ENCODE measurements at regions of chr20 and their contacts with region 1.

Region 1: GRCh38 chr20:41889126-41889870 is 271.1 kb upstream of the CHD6 start:
- DNase-seq: peak; percentile 50
- H3K4me3 Mint-ChIP-seq: no peak overlapping the region
- H3K27ac Mint-ChIP-seq: no peak overlapping the region
- H3K4me1 Mint-ChIP-seq: peaks cover 20% of the 10 kb centered on the region
- H3K27me3 Mint-ChIP-seq: no peaks in the 10 kb centered on the region
- CTCF ChIP-seq: peak; percentile 13

Region 2: DNA sequence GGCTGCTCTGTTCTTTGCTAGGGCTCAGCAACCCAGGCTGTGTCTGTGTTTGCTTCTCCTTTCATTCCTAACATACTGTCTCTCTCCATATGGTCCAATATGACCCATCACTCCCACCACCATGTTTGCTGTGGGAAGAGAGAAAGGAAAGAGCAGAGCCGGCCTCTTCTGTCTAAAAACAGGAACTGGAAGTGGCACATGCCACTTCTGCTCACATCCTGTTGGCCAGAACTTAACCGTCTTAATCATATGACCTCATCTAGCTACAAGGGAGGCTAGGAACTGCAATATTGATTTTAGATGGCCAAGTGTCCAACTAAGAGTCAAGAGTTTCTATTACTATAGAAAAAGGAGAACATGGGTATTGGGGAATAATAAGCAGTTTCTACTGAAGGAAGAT is 58.6 kb before region 1 on chr20:
- CTCF ChIA-PET with region 1: no interaction called
- intact Hi-C with region 1: no loop called
- DNase-seq: no peak
- H3K4me3 Mint-ChIP-seq: no peak overlapping the region
- H3K27ac Mint-ChIP-seq: no peak overlapping the region
- H3K4me1 Mint-ChIP-seq: no peaks in the 10 kb centered on the region
- H3K27me3 Mint-ChIP-seq: peaks cover 16% of the 10 kb centered on the region
- CTCF ChIP-seq: no peak

Region 3: DNA sequence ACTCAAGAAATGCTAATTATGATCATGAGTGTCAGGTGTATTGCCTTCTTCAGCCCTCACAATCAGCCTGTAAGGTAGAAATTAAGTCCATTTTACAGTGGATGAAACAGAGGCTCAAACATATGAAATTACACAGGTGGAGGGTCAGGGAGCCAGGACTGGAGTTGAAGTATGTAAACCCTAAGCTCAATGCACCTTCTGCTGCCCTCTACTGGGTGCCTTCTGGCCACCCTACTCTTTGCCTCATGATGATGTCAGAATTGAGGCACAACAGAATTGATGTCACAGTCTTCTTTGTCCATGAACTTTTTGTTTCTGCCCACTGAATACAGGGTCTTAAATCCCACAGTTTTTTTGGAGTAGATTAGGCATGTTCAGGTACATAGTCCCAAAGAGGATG is 129.7 kb after region 1 on chr20:
- CTCF ChIA-PET with region 1: interaction called, 8 read pairs
- intact Hi-C with region 1: loop called (anchors 5 kb)
- DNase-seq: peak; percentile 45
- H3K4me3 Mint-ChIP-seq: no peak overlapping the region
- H3K27ac Mint-ChIP-seq: no peak overlapping the region
- H3K4me1 Mint-ChIP-seq: no peaks in the 10 kb centered on the region
- H3K27me3 Mint-ChIP-seq: no peaks in the 10 kb centered on the region
- CTCF ChIP-seq: no peak